BJ (cell line): ENCODE measurements at regions of chr19 and their contacts with region 1.

Region 1: GRCh38 chr19:13817615-13818371 is 22.6 kb downstream of the ZSWIM4 start:
- DNase-seq: no peak
- H3K4me3 ChIP-seq: no peak overlapping the region
- H3K27me3 ChIP-seq: no peaks in the 10 kb centered on the region
- CTCF ChIP-seq: no peak

Region 2: DNA sequence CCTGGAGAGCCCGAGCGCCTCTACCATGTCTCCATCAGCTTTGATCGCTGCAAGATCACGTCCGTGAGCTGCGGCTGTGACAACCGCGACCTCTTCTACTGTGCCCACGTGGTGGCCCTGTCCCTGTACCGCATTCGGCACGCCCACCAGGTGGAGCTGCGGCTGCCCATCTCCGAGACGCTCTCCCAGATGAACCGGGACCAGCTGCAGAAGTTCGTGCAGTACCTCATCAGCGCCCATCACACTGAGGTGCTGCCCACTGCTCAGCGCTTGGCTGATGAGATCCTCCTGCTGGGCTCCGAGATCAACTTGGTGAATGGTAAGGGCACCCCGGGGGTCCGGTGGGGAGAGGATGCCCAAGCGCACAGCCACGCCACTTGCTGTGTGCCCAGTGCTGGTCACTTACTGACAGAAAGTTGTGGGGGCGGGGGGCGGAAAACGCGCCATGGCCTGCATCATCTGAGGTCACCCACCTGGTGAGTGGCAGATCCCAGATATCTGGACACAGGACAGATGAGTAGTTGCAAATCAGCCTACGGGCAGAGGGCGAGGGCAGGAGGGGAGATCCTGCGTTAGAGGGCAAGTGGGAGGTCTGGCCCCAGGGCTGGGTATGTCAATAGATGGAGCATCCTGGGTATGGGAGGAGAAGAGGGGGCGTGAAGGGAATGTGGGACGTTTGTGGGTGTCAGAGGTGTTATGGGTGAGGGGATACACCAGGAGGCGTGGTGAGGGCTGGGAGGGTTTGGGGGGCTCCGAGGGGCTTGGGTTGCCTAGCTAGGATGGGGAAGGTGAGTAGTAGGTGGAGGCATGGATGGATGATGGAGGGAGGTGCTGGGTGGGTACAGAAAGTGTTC is 12.7 kb before region 1 on chr19:
- CTCF ChIA-PET with region 1: no interaction called
- POLR2A ChIA-PET with region 1: interaction called, 11 read pairs
- DNase-seq: no peak
- H3K4me3 ChIP-seq: no peak overlapping the region
- H3K27me3 ChIP-seq: no peaks in the 10 kb centered on the region
- CTCF ChIP-seq: peak; percentile 21; the same call in 1 of the 2 replicates